ENCODE measurements at regions of chr11 and their contacts with region 1.

Region 1: DNA sequence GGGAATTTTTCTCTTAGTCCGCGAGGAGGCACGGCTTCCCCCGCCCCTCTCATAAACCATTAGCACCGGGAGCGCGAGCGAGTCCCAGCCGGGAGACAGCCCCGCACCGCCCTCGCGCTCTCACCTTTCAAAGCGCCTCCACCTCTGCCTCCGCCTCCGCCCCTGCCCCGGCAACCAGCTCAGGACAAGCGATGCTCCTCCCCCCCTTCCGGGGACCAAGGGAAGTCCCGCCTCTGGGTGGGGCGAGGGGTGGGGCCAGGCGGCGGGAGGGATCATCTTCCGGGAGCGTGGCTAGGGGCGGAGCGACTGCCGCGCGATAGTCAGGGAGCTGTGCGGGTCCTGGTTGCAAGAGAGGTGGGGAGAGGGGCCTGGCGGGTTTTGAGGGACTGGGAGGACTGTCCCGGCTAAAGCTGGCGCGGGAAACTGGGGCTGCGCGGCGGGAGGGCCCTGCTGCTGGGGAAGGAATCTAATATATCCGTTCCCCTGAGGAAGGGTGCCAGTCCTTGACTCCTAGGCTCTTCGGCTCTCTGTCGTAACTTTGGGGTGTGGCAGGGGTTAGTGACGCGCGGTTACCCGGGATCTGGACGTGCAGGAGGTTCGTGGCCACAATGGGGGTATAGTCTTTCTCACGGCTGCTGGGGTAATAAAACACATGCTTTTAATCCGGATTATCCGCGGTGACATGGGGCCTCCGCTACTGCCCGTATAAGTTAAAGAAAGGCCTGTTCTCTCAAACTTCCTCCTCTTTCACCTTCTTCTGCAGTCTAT is at the starts of genes CCDC82 and JRKL:
- DNase-seq: peak; percentile 64
- H3K4me3 ChIP-seq: peak within 1 kb of the TSS; percentile 97
- H3K27me3 ChIP-seq: no peaks in the 10 kb centered on the region
- CTCF ChIP-seq: no peak
- polyA plus RNA-seq, gene CCDC82: 4.6 and 10.6 TPM in 2 replicates
- polyA plus RNA-seq, gene JRKL: 2.9 and 6.8 TPM in 2 replicates

Region 2: DNA sequence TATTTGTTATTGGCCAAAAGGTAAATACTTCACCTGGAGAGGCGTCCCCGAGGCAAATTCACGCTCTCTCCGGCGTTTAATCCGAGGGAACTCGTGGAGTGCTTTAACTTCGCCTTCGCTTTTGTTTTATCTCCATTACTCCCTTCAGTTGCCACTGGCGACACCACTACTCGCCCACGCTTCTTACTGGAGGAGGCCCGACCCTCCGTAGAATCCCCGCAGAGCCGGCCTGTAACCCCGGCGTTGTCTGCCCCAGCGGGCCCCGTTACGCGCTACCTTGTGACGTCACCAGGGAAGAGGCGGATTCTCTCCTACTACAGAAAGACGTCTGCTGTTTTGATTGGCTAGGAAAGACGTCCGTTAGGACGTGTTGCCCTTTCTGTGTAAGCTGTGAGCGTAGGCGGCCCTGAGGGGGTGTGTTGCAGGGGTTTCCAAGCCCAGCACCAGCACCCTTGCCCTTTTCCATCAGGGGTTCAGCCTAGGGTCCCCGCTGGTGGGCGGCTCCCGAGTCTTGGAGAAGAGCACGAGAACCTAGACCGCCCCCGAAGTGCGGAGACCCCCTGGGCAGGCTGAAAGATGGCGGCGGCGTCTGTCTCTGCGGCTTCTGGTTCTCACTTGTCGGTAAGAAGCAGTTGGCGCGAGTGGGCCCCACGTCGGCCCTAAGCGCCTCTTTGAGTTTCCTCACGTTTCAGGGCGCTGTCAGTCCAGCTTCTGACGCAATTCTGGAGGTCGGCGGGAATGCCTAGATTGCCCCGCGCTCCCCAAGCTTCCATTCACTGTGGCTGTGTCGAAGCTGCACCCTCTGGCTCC is 599.6 kb before region 1 on chr11 and contains the start of gene CEP57:
- CTCF ChIA-PET with region 1: interaction called, 10 read pairs
- POLR2A ChIA-PET with region 1: interaction called, 5 read pairs
- DNase-seq: peak; percentile 82
- H3K4me3 ChIP-seq: peak within 1 kb of the TSS; percentile 88
- H3K27me3 ChIP-seq: no peaks in the 10 kb centered on the region
- CTCF ChIP-seq: no peak
- polyA plus RNA-seq, gene CEP57: 18.3 and 27.9 TPM in 2 replicates

Region 3: DNA sequence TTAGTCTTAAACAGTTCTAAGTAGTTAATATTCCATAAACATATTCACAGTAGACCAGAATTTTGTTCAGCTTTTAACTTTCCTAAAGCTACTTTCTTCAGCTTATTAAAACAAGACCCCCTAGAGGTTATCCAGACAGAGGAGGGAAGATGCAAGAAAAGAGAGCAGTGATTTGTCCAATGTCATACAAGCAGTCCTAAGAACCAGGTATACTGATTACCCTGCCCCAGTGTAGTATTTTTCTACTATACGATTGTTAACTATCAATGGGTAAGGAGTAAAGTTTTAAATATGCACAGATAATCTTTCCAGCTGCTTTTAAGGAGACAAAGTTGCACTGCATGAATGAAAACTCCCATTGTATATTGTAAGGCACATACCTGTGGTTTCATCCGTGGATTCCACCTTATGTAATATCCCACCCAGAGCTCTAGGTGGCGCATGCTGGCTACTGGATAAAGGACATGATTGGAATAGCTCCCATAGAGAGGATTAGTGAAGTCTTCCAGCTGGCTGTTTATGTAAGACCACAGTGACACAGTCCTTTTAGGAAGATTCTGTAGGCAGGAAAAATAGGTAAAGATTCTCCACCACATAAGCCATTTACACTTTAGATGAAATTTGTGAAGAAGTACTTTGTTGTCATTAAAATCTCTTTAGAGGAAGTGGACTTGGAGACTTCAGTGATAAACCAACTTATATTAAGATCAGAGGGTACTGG is 554.0 kb before region 1 on chr11:
- CTCF ChIA-PET with region 1: interaction called, 17 read pairs
- POLR2A ChIA-PET with region 1: no interaction called
- DNase-seq: peak; percentile 54
- H3K4me3 ChIP-seq: no peak overlapping the region
- H3K27me3 ChIP-seq: no peaks in the 10 kb centered on the region
- CTCF ChIP-seq: peak; percentile 86

Region 4: GRCh38 chr11:95948637-95949036 is 441.3 kb before region 1 on chr11:
- CTCF ChIA-PET with region 1: no interaction called
- POLR2A ChIA-PET with region 1: interaction called, 19 read pairs
- DNase-seq: no peak
- H3K4me3 ChIP-seq: no peak overlapping the region
- H3K27me3 ChIP-seq: no peaks in the 10 kb centered on the region
- CTCF ChIP-seq: no peak

Region 5: DNA sequence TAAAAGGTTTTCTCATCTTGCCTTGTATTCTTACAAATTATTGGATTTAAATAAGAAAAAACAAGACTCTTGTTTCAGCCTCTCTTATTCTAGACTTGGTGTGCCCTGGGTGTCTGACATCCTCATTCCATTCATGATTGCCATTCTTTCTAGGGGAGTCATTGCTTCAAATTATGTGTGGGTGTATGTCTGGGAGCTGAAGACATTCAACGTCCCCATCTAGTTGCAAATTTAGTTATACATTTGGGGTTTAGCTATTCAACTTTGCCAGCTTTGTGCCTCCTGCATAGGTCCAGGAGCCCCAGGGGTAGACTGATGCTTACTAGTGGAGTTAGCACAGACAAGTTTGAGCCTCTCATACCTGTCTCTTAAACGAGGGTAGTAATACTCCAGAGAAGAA is 64.9 kb before region 1 on chr11:
- CTCF ChIA-PET with region 1: no interaction called
- POLR2A ChIA-PET with region 1: no interaction called
- DNase-seq: peak; percentile 68
- H3K4me3 ChIP-seq: no peak overlapping the region
- H3K27me3 ChIP-seq: no peaks in the 10 kb centered on the region
- CTCF ChIP-seq: no peak

Region 6: DNA sequence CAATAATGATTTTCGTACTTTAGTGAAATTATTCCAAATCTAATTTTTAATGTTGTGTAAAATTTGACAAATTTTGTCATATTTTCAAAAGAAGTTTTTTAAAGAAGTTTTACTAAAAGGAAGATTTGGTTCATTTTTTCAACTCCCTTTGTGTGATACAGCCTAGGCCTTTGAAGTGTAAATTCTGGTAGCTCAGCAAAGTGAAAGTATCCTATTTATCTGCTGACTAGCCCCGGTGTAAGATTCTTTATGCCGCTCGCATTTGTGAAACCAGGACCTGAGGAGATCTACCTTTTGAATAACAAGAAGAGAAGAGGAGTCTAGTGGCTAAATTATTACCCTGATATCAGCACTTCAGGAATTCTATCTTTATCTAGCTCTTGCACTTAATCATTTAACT is 177.3 kb after region 1 on chr11:
- CTCF ChIA-PET with region 1: no interaction called
- POLR2A ChIA-PET with region 1: no interaction called
- DNase-seq: no peak
- H3K4me3 ChIP-seq: no peak overlapping the region
- H3K27me3 ChIP-seq: no peaks in the 10 kb centered on the region
- CTCF ChIP-seq: no peak